ENCODE measurements at regions of chr1 and their contacts with region 1.

Region 1: DNA sequence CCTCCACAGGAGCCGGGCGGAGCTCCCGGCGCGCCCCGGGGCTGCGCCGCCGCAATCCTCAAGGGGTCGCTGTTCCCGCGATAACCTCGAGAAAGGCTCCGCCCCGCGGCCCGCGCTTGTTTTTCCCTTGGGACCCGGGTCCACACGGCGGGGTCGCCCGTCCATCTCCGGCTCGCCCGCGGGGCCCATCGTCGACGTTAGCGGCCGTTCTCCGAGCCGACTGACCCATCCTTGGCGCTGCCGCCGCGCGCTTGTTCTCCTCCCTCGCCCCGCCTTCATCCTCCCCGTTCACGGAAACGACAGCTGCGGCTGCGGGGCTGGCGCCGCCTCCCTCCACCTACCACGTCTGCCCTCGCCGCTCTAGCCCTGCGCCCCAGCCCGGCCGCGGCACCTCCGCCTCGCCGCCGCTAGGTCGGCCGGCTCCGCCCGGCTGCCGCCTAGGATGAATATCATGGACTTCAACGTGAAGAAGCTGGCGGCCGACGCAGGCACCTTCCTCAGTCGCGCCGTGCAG is at the start of gene SH3GLB1:
- DNase-seq: peak; percentile 26
- H3K4me3 ChIP-seq: peak within 1 kb of the TSS; percentile 86
- H3K27me3 ChIP-seq: no peaks in the 10 kb centered on the region
- CTCF ChIP-seq: peak; percentile 81
- polyA plus RNA-seq, gene SH3GLB1: 33.9 and 61.9 TPM in 2 replicates

Region 2: DNA sequence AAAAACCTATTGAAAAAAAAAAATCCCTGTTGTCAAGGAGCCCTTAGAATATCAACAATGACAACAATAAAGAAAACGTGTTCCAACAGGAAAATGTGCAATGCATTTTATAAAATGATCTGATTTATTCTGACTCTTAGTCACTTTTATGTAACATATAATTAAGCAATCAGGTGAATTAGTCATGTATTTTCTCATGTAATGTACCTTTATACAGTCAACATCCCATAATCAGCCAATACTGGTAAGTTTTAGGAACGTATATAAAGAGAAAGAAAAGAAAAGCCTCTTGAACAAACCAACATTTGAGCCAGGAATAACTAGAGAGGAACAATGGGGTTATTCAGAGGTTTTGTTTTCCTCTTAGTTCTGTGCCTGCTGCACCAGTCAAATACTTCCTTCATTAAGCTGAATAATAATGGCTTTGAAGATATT is 157.7 kb before region 1 on chr1 and contains the start of gene CLCA4:
- CTCF ChIA-PET with region 1: no interaction called
- POLR2A ChIA-PET with region 1: no interaction called
- DNase-seq: no peak
- H3K4me3 ChIP-seq: no peak within 1 kb of the TSS
- H3K27me3 ChIP-seq: no peaks in the 10 kb centered on the region
- CTCF ChIP-seq: no peak
- polyA plus RNA-seq, gene CLCA4: not detected in 2 replicates

Region 3: DNA sequence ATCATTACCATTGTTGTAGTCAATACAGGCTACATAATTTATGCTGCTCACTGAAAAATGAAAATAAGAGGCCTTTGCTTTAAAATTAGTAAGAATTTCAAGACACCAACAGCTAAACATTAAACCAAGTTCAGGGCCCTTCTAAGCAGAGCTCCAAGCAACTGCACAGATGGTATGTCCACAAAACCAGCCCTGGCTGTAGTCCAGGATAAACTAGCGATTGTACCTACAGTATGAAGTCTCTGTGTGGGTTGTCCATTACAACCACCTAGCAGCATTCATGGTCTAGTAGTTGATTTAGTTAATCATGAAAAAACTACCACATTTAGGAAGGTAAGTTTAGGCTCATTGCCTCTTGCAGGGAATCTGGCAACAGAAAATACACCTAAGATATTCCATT is 122.4 kb before region 1 on chr1:
- CTCF ChIA-PET with region 1: no interaction called
- POLR2A ChIA-PET with region 1: no interaction called
- DNase-seq: no peak
- H3K4me3 ChIP-seq: no peak overlapping the region
- H3K27me3 ChIP-seq: no peaks in the 10 kb centered on the region
- CTCF ChIP-seq: no peak

Region 4: DNA sequence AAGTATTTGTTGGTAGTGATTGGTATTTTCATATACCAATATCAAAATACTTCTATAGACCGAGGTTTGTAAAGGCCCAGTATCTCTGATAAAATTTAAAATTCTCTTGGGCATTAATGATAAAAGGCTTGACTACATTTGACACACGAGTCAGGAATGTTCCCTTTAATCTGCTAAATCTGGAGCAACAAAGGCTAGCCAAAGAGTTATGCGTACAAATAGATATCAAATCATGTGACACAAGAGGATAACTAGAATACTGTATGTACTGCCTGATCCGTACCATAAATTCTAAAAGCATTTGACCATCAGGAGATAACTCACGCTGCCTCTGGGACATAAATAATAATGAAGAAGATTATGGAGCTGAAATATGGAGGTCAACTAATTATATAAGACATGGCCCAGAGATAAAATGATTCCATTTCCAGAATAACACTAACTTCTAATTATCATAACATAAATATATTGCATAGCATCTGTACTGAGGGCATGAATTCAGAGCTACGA is 64.3 kb before region 1 on chr1:
- CTCF ChIA-PET with region 1: no interaction called
- POLR2A ChIA-PET with region 1: no interaction called
- DNase-seq: no peak
- H3K4me3 ChIP-seq: no peak overlapping the region
- H3K27me3 ChIP-seq: no peaks in the 10 kb centered on the region; the same call in 1 of the 2 replicates
- CTCF ChIP-seq: no peak

Region 5: DNA sequence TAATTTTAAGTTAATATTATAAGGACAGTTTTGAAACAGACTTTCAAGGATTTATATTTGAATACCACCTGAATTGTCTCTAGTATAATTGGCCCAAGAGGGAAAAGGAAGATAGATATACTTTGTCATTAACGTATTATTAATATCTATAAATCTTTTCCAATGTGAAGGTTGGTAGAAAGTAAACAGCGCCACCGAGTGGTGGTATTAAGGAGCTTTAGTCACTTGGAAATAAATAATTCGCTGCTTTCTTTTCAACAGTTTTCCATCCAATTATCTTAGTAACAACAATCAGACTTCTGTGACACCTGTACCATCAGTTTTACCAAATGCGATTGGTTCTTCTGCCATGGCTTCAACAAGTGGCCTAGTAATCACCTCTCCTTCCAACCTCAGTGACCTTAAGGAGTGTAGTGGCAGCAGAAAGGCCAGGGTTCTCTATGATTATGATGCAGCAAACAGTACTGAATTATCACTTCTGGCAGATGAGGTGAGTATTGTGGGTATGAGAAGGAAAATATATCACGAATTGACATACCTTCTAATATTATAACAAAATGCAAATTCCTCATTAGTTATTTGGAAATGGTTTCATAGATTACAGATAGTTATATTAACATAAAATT is 37.5 kb after region 1 on chr1:
- CTCF ChIA-PET with region 1: interaction called, 10 read pairs
- POLR2A ChIA-PET with region 1: no interaction called
- DNase-seq: no peak
- H3K4me3 ChIP-seq: no peak overlapping the region
- H3K27me3 ChIP-seq: no peaks in the 10 kb centered on the region
- CTCF ChIP-seq: peak; percentile 62

Region 6: DNA sequence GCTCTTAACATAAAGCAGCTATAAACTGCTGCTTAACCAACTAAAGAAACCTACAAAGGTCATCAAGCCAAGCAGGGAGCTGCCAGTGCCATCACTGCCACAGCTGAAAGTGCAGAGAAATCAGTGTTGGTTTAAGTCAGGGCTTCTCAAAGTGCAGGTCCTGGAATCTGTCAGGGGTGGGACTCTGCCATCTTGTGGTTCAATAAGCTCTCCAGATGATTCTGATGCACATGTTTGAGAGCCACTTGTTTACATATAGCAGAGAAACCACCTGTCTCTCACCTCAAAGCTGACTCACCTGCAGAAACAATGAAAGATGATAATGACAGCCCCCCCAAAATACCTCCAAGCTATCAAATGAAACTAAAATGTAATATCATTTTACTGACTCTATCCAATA is 49.2 kb after region 1 on chr1:
- CTCF ChIA-PET with region 1: interaction called, 13 read pairs
- POLR2A ChIA-PET with region 1: no interaction called
- DNase-seq: no peak
- H3K4me3 ChIP-seq: no peak overlapping the region
- H3K27me3 ChIP-seq: no peaks in the 10 kb centered on the region; the same call in 1 of the 2 replicates
- CTCF ChIP-seq: no peak

Measured in BJ (cell line).